ENCODE measurements at regions of chrX and their contacts with region 1.

Region 1: GRCh38 chrX:140141444-140142029 is 176.2 kb upstream of the CXorf66 start:
- DNase-seq: peak; percentile 28
- ATAC-seq: peak; percentile 56
- H3K4me3 Mint-ChIP-seq: no peak overlapping the region
- H3K27ac Mint-ChIP-seq: no peak overlapping the region
- H3K4me1 Mint-ChIP-seq: 0 out of 2 replicates have a peak, but pooled peaks cover 2% of the 10 kb centered on the region
- H3K27me3 Mint-ChIP-seq: no peaks in the 10 kb centered on the region
- CTCF ChIP-seq: peak; percentile 35; the same call in 1 of the 2 replicates

Region 2: DNA sequence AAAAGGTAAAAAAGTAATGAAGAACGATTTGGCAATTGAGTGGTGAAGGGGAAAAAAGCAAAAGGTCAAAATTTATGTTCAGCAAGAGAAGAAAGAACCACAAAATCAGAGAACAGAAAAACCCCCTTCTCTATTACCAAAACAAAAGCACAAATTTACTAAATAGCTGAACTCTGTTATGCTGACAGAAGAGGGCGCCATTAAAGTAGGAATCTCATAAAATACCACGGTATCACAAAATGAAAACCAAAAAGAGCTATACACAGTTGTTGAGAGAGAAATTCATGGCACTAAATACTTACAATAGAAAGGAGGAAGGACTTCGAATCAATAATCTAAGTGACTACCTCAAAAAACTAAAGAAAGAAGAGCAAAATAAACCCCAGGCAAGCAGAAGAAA is 106.6 kb before region 1 on chrX:
- CTCF ChIA-PET with region 1: interaction called, 15 read pairs
- POLR2A ChIA-PET with region 1: no interaction called
- DNase-seq: no peak
- ATAC-seq: no peak
- H3K4me3 Mint-ChIP-seq: no peak overlapping the region
- H3K27ac Mint-ChIP-seq: no peak overlapping the region
- H3K4me1 Mint-ChIP-seq: peaks cover 5% of the 10 kb centered on the region
- H3K27me3 Mint-ChIP-seq: no peaks in the 10 kb centered on the region; the same call in 1 of the 2 replicates
- CTCF ChIP-seq: no peak

Region 3: GRCh38 chrX:140057001-140057411 is 84.5 kb before region 1 on chrX:
- CTCF ChIA-PET with region 1: interaction called, 13 read pairs
- POLR2A ChIA-PET with region 1: no interaction called
- DNase-seq: peak; percentile 79
- ATAC-seq: peak; percentile 96
- H3K4me3 Mint-ChIP-seq: no peak overlapping the region
- H3K27ac Mint-ChIP-seq: no peak overlapping the region
- H3K4me1 Mint-ChIP-seq: peaks cover 38% of the 10 kb centered on the region
- H3K27me3 Mint-ChIP-seq: peaks cover 4% of the 10 kb centered on the region
- CTCF ChIP-seq: peak; percentile 77

Region 4: DNA sequence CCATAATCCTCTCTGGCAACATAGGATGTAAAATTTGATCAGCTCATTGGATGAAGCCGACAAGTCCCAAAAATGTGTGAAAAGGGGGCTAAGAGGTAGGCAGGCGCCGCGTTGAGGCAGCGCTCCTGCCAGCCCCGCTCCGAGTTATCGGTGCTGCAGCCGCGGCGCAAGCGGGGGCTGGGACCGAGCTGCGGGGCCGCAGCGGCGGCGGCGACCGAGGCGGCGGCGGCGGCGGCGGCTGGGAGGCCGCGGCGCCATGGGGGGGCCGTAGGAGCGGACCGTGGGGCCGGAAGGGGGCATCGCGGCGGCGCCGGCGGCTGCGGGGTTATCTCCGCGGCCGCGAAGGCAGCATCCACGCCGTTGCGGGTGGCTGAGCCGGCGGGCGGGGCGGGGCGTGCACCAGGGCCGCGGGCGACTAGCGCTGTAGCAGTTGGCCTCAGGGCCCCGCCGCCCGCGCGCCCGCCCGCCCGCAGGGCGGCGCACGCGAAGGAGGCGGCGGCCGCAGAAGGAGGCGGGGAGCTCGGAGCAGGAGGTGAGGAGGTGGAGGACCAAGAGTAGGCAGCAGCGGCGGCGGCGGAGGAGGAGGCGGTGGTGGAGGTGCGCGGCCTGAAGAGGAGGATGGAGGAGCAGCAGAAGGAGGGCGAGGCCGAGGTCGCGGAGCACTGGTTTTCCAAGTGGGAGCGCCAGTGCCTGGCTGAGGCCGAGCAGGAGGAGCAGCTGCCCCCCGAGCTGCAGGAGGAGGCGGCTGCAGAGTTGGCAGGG is 50.2 kb before region 1 on chrX:
- CTCF ChIA-PET with region 1: interaction called, 10 read pairs
- POLR2A ChIA-PET with region 1: no interaction called
- DNase-seq: peak; percentile 37
- ATAC-seq: peak; percentile 83
- H3K4me3 Mint-ChIP-seq: peak overlapping the region; percentile 62
- H3K27ac Mint-ChIP-seq: no peak overlapping the region
- H3K4me1 Mint-ChIP-seq: peaks cover 18% of the 10 kb centered on the region
- H3K27me3 Mint-ChIP-seq: peaks cover 17% of the 10 kb centered on the region
- CTCF ChIP-seq: no peak

Region 5: GRCh38 chrX:140177821-140178220 is 36.3 kb after region 1 on chrX:
- CTCF ChIA-PET with region 1: no interaction called
- POLR2A ChIA-PET with region 1: no interaction called
- DNase-seq: peak; percentile 16
- ATAC-seq: peak; percentile 81
- H3K4me3 Mint-ChIP-seq: no peak overlapping the region; the same call in 1 of the 2 replicates
- H3K27ac Mint-ChIP-seq: peak overlapping the region; percentile 93
- H3K4me1 Mint-ChIP-seq: peaks cover 44% of the 10 kb centered on the region
- H3K27me3 Mint-ChIP-seq: no peaks in the 10 kb centered on the region
- CTCF ChIP-seq: no peak

Region 6: GRCh38 chrX:140190441-140191108 is 49.0 kb after region 1 on chrX:
- CTCF ChIA-PET with region 1: no interaction called
- POLR2A ChIA-PET with region 1: no interaction called
- DNase-seq: no peak
- ATAC-seq: no peak
- H3K4me3 Mint-ChIP-seq: no peak overlapping the region
- H3K27ac Mint-ChIP-seq: no peak overlapping the region
- H3K4me1 Mint-ChIP-seq: peaks cover 7% of the 10 kb centered on the region; the same call in 1 of the 2 replicates
- H3K27me3 Mint-ChIP-seq: no peaks in the 10 kb centered on the region; the same call in 1 of the 2 replicates
- CTCF ChIP-seq: no peak